ENCODE measurements at regions of chr2 and their contacts with region 1.

Region 1: GRCh38 chr2:207625018-207625907 is at the start of gene METTL21A:
- DNase-seq: peak; percentile 95 to 96
- H3K4me3 ChIP-seq: peak within 1 kb of the TSS; percentile 93
- H3K4me3 Mint-ChIP-seq: peak within 1 kb of the TSS; percentile 93
- H3K27ac Mint-ChIP-seq: peak within 1 kb of the TSS; percentile 92
- H3K4me1 ChIP-seq: no peaks in the 10 kb centered on the region; the same call in 1 of the 2 replicates
- H3K4me1 Mint-ChIP-seq: peaks cover 10% of the 10 kb centered on the region
- H3K27me3 ChIP-seq: no peaks in the 10 kb centered on the region
- H3K27me3 Mint-ChIP-seq: no peaks in the 10 kb centered on the region
- CTCF ChIP-seq: peak; percentile 33 to 61
- total RNA-seq, gene METTL21A: 31.0 and 34.0 TPM in 2 replicates

Region 2: DNA sequence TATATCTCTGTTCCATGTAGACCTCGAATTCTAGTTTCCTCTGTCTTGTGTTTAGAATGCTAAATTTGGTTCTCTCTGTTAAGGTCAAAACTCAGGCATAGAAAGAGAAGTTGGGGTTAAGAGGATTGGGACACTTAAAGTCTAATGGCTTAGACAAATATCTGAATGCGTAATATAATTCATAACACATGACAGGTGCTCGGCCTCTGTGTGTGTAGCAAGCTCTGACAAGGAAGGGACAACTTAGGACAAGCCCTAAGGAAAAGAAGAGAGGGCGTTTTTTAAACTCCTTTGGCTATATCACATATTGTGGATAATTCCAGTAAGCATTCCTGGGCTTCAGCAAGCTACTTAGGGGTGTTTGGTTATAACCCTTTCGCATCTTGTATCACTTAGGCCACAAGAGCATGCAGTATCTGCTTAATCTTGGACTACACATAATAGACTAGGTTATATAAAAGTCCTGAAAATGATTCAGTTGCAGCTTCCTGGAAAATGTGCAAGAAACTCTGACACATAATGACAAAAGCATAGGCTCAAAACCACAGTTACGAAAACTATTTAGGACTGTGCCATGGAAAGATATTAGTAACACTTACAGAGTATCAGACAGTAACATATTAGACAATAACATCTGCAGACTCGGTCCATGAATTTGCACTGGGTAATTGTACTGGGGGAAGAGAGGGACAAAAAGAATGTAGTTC is 111.6 kb before region 1 on chr2:
- CTCF ChIA-PET with region 1: no interaction called
- POLR2A ChIA-PET with region 1: no interaction called
- intact Hi-C with region 1: no loop called
- DNase-seq: no peak
- H3K4me3 ChIP-seq: no peak overlapping the region
- H3K4me3 Mint-ChIP-seq: no peak overlapping the region
- H3K27ac Mint-ChIP-seq: no peak overlapping the region
- H3K4me1 ChIP-seq: no peaks in the 10 kb centered on the region
- H3K4me1 Mint-ChIP-seq: peaks cover 9% of the 10 kb centered on the region
- H3K27me3 ChIP-seq: no peaks in the 10 kb centered on the region
- H3K27me3 Mint-ChIP-seq: no peaks in the 10 kb centered on the region
- CTCF ChIP-seq: no peak

Region 3: GRCh38 chr2:207529330-207530159 is 95.7 kb before region 1 on chr2 and contains the start of gene CREB1:
- CTCF ChIA-PET with region 1: interaction called, 8 read pairs
- POLR2A ChIA-PET with region 1: interaction called, 16 read pairs
- intact Hi-C with region 1: loop called (anchors 1 kb)
- DNase-seq: peak; percentile 98 to 100
- H3K4me3 ChIP-seq: peak within 1 kb of the TSS; percentile 89
- H3K4me3 Mint-ChIP-seq: peak within 1 kb of the TSS; percentile 78
- H3K27ac Mint-ChIP-seq: peak within 1 kb of the TSS; percentile 97
- H3K4me1 ChIP-seq: peaks cover 35% of the 10 kb centered on the region
- H3K4me1 Mint-ChIP-seq: peaks cover 21% of the 10 kb centered on the region
- H3K27me3 ChIP-seq: no peaks in the 10 kb centered on the region
- H3K27me3 Mint-ChIP-seq: no peaks in the 10 kb centered on the region
- CTCF ChIP-seq: no peak
- total RNA-seq, gene CREB1: 49.7 and 59.0 TPM in 2 replicates

Region 4: DNA sequence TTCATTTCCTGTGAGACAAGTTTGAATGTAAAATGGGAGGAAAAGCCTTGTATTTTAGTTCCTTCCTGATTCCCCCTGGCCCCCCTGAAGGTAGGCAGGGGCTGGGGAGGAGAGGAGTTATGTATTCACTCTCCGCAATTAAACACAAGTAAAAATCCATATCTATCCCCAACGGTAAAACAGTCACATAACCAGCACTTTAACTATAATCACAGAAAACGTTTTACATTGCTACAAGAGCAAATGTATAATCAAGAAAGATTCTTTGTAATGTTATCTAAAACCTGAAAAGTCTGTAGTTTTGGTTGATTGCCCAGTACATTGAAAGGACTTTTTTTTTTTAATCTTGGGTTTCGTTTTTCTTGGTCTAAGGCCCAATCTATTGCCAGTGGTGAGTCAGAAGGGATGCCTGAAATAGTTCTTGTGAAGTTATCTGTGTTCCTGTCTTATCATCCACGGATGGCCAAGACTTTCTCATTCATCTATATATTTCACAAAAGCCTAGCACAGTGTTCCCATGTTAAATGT is 51.6 kb after region 1 on chr2:
- CTCF ChIA-PET with region 1: no interaction called
- POLR2A ChIA-PET with region 1: no interaction called
- intact Hi-C with region 1: loop called (anchors 2 kb)
- DNase-seq: peak; percentile 40 to 55
- H3K4me3 ChIP-seq: no peak overlapping the region
- H3K4me3 Mint-ChIP-seq: peak overlapping the region; percentile 65
- H3K27ac Mint-ChIP-seq: peak overlapping the region; percentile 96
- H3K4me1 ChIP-seq: peaks cover 34% of the 10 kb centered on the region
- H3K4me1 Mint-ChIP-seq: peaks cover 35% of the 10 kb centered on the region
- H3K27me3 ChIP-seq: no peaks in the 10 kb centered on the region
- H3K27me3 Mint-ChIP-seq: no peaks in the 10 kb centered on the region
- CTCF ChIP-seq: no peak

Region 5: DNA sequence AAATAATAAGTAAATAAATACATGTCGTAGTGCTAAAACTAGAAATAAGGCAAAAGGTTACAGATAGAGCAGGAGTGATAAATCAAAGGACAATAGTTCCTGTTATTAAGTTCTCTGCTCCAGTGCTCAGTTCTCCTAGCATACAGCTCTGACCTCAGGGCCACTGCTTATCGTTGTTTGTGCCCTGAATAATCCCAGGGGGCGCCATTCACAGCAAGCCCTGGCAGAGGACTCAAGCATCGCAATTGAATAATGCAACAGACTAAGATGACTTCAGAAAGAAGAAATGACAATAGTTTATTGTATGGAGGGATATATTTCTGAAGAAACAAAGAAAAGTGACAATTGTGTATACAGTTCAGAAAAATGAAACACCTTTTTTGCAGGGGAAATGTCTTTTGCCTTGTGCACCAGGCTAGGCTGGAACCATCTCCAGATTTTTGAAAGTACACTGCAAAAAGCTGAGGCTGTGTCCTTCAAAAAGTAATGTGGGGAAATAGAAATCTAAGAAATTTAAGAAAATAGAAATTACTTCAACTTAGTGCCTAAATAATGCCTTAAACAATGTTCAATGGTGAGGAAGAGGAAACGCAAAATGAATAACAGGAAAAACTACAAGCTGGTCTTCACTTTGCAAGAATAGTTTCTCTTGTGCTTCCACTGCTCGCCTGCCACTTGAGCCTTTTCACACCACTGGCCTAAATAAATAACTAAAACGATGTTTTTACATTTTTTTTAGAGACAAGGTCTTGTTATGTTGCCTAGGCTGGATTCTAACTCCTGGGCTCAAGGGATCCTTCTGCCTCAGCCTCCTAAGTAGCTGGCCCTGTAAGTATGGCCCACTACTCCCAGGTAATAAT is 67.2 kb after region 1 on chr2:
- CTCF ChIA-PET with region 1: interaction called, 13 read pairs
- POLR2A ChIA-PET with region 1: no interaction called
- intact Hi-C with region 1: no loop called
- DNase-seq: peak; percentile 54 to 58
- H3K4me3 ChIP-seq: no peak overlapping the region
- H3K4me3 Mint-ChIP-seq: no peak overlapping the region
- H3K27ac Mint-ChIP-seq: no peak overlapping the region
- H3K4me1 ChIP-seq: no peaks in the 10 kb centered on the region
- H3K4me1 Mint-ChIP-seq: peaks cover under 1% of the 10 kb centered on the region
- H3K27me3 ChIP-seq: no peaks in the 10 kb centered on the region
- H3K27me3 Mint-ChIP-seq: no peaks in the 10 kb centered on the region
- CTCF ChIP-seq: peak; percentile 42 to 49

Region 6: DNA sequence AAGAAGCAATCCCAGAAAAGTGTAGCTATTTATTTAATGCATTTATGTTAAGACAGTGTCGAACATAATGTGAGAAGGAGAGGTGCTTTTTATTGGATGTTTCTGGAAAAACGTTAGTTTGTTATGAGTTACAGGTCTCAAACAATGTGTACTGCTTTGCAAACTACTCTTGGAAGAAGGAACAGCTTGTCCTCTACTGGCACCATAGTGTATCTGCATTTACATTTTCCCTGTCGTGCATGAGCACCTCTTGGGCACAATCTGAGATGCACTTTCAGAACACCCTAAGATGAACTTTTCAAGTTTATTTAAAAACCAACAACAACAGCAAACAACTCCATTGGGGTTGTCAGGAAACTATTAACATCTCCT is 109.0 kb after region 1 on chr2:
- CTCF ChIA-PET with region 1: interaction called, 24 read pairs
- POLR2A ChIA-PET with region 1: interaction called, 6 read pairs
- intact Hi-C with region 1: loop called (anchors 1 kb)
- DNase-seq: peak in 1 of 2 experiments; percentile 55
- H3K4me3 ChIP-seq: no peak overlapping the region
- H3K4me3 Mint-ChIP-seq: peak overlapping the region; percentile 52
- H3K27ac Mint-ChIP-seq: no peak overlapping the region
- H3K4me1 ChIP-seq: peaks cover 20% of the 10 kb centered on the region
- H3K4me1 Mint-ChIP-seq: peaks cover 19% of the 10 kb centered on the region
- H3K27me3 ChIP-seq: no peaks in the 10 kb centered on the region
- H3K27me3 Mint-ChIP-seq: no peaks in the 10 kb centered on the region
- CTCF ChIP-seq: peak in 1 of 2 experiments; percentile 67

Region 7: DNA sequence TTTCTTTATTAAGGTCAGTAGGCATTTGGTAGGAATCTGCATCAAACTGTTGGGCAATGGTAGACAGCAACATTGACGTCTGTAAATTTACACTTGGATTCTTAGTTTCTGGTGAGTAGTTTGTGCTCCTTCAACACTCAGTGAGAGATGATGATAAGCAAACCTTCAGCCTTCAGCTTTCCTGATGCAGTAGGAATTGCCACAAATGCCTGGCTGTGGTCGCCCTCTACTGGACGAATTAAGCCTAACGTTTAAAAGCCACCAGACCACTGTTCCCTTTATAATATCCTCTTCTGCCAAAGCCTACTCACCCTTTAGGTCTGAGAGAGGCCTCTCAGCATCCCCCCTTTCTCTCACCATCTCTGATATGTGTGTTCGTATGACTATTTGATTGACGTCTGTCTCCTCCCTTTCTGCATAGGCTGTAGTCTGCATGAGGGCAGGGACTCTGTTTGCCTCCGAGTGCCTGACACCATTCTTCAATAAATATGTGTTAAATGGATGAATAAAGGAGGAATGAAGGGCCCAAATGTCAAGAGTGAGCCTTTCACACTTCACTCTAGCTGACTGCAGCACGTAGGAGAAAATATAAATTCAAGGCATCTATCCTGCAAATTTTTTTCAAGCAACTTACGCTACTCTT is 447.1 kb after region 1 on chr2:
- CTCF ChIA-PET with region 1: no interaction called
- POLR2A ChIA-PET with region 1: no interaction called
- intact Hi-C with region 1: loop called (anchors 10 kb)
- DNase-seq: peak; percentile 73 to 83
- H3K4me3 ChIP-seq: no peak overlapping the region
- H3K4me3 Mint-ChIP-seq: no peak overlapping the region
- H3K27ac Mint-ChIP-seq: no peak overlapping the region
- H3K4me1 ChIP-seq: no peaks in the 10 kb centered on the region
- H3K4me1 Mint-ChIP-seq: peaks cover 3% of the 10 kb centered on the region
- H3K27me3 ChIP-seq: no peaks in the 10 kb centered on the region
- H3K27me3 Mint-ChIP-seq: no peaks in the 10 kb centered on the region
- CTCF ChIP-seq: peak; percentile 84